ENCODE measurements at regions of chr5 and their contacts with region 1.

Region 1: GRCh38 chr5:72138943-72139521 is 31.8 kb downstream of the MAP1B start:
- DNase-seq: no peak
- ATAC-seq: peak in 1 of 2 donors; percentile 46

Region 2: GRCh38 chr5:72018146-72018803 is 120.8 kb before region 1 on chr5:
- intact Hi-C with region 1: no loop called
- DNase-seq: peak; percentile 32
- ATAC-seq: peak in 1 of 2 donors; percentile 30

Region 3: GRCh38 chr5:72209515-72210115 is 70.6 kb after region 1 on chr5:
- intact Hi-C with region 1: loop called in 1 of 2 experiments (anchors 10 kb)
- DNase-seq: no peak
- ATAC-seq: no peak

Region 4: DNA sequence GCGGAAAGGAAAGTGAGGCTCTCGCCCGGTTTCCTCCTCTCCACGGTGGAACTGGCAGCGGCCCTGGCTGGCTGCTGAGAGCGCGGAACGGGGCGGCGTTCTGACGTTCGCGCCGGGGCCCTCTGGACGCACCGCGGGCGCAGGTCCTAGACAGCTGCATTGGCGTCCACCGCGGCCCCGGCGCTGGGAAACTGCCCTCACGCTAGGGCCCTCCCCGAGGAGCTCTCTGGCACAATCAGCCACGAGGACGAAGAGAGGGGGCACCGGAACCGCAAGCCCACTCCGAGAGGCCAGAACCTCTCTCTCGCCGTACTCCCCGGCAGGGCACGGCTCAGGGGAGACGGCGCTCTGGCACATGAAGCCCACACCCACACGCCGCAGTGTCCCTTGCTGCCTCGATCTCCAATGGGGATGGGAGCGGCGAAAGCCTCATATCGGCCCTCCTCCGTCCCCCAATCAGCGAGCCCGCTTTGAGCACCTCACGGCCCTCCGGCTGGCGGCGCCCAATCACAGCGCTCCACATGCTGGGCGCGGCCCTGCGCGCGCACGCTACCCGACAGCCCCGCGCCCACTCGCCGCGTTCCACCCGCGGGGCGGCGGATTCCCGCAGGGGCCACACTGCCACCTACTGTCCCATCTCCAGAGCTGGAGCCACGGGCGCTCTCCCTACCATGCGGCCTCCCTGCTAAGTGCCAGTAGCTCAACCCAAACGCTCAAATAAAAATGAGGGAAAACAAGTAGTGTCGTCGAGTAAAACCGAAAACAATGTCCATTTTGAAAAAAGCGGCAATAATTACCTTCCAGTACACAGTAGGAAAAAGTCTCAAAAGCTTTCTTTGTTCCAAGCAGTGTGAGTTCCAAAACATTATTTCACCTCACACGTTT is 169.2 kb after region 1 on chr5:
- intact Hi-C with region 1: loop called in 1 of 2 experiments (anchors 5 kb)
- DNase-seq: peak; percentile 98
- ATAC-seq: peak; percentile 99